Calu3 (cell line): ENCODE measurements at regions of chr6 and their contacts with region 1.

Region 1: DNA sequence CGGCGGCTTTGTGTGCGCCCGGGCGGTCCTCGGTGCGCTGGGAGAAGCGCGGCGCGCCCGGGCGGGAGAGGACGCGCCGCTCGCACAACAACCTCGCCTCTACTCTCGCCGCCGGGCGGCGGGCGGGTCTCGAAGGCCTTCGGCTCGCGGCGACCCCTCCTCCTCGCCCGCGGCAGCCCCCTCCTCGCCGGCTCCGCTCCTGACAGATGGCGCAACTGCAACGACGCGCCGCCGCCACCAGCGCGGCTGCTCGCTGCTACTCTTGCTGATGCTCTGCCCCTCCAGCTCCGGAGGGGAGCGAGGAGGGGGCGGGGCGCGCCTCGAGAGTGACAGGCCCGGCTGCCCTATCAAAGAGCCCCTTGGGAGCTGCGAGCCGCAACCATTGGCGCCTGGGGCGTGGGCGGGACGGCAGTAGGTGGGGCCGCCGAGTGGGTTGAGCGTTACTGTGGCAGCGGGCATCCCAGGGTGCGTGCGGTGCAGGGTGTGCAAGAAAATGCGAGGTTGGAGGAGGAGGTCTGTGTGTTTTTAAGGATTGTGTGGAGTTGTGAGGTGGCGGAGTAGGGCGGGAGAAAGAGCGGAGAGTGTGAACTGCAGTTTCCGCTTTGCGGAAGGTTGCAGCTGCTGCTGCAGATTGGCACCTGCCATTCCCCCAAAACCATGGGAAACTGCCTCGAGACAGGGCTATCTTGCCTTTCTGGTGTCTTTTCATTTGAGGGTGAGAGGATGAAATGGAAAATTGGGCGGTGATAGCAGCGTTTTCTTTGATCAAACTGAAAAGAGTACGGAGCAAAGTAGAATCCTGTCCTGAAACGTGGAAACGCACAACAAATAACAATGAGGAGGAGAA is at the start of gene FYN:
- DNase-seq: peak; percentile 99
- H3K4me3 Mint-ChIP-seq: peak within 1 kb of the TSS; percentile 84
- H3K27ac Mint-ChIP-seq: peak within 1 kb of the TSS; percentile 72
- H3K4me1 Mint-ChIP-seq: peaks cover 10% of the 10 kb centered on the region
- H3K27me3 Mint-ChIP-seq: no peaks in the 10 kb centered on the region
- CTCF ChIP-seq: no peak
- total RNA-seq, gene FYN: 61.0 and 64.6 TPM in 2 replicates

Region 2: DNA sequence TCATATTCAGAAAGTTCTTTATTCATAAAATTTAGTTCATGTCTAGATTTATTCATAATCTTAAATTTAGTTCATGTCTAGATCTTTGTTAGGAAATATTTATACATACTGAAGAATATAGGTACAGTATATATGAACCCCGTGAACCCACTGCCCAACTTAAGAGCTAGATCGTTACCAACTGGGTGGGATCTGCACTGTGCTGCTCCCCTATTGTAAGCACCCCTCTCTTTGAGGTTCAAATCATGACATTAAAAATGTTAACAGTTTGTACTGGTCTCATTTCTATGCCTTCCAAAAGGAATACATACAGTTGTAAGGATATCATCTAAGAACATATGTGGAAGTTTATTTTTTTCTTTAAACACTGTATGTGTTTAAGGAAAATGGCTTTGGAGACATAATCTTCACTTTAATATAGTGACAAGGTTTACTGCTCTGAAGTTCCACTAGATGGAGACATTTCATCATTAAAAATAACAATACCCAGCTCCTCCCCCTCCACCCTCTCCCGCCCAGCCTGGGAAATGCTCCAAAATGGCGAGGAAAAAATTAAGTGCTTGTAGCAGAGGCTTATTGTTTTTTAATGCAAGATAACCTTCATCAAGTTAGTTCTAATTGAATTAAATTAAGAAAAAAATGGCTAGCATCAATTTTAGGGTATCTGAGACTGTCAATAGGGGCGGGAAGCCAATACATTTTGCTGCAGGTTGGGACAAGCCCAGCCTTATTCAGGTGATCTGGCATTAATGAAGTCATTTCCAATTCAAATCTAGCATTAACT is 163.6 kb before region 1 on chr6:
- CTCF ChIA-PET with region 1: no interaction called
- intact Hi-C with region 1: loop called (anchors 2 kb)
- DNase-seq: peak; percentile 59
- H3K4me3 Mint-ChIP-seq: no peak overlapping the region
- H3K27ac Mint-ChIP-seq: no peak overlapping the region
- H3K4me1 Mint-ChIP-seq: peaks cover 15% of the 10 kb centered on the region
- H3K27me3 Mint-ChIP-seq: no peaks in the 10 kb centered on the region
- CTCF ChIP-seq: peak; percentile 75

Region 3: DNA sequence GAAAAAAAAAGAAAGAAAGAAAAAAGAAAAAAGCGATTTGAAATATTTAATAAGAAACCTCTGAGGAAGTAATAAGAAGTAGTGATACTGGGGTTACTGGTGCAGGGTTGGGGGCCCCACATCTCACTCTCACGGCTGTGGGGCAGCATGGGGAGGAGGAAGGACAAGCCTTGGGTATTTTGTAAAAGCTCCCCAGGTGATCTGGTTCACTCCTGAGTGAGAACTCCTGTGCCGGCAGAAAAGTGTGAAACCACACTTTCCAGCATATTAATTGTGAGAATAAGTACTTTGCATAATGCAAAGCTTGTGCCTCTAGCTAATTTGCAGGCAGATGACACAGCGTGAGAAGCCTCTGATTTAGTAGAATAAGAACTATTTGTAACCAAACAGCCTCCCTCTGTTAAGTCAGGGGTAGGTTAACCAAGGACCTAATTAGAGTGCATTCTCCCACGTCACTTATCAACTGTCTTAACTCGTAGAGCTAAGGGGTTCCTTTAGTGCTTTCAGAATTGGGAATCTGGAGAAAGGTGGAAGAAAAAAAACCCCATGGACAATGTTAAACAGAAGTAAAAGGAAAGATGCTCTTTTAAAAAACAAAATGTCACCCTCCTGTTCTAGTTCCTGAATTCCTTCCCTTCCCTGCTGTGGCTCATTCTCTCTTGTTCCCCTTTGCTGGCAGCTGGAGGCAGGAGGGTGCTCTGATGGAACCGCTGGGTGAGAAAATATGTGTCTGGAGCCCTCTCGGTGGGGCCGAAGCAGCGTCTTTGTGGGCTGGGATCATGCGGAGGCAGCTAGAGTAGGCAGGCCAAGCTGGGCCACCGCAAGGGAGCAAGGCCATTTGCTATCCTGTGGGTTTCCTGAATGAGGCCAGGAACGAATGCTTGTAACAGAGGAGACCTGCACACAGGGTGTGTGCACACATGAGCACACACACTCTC is 108.9 kb before region 1 on chr6:
- CTCF ChIA-PET with region 1: no interaction called
- intact Hi-C with region 1: loop called (anchors 5 kb)
- DNase-seq: no peak
- H3K4me3 Mint-ChIP-seq: no peak overlapping the region
- H3K27ac Mint-ChIP-seq: no peak overlapping the region
- H3K4me1 Mint-ChIP-seq: peaks cover 48% of the 10 kb centered on the region
- H3K27me3 Mint-ChIP-seq: no peaks in the 10 kb centered on the region
- CTCF ChIP-seq: no peak

Region 4: GRCh38 chr6:111793711-111794111 is 79.7 kb before region 1 on chr6:
- CTCF ChIA-PET with region 1: no interaction called
- intact Hi-C with region 1: no loop called
- DNase-seq: no peak
- H3K4me3 Mint-ChIP-seq: no peak overlapping the region
- H3K27ac Mint-ChIP-seq: no peak overlapping the region
- H3K4me1 Mint-ChIP-seq: no peaks in the 10 kb centered on the region
- H3K27me3 Mint-ChIP-seq: no peaks in the 10 kb centered on the region
- CTCF ChIP-seq: no peak

Region 5: DNA sequence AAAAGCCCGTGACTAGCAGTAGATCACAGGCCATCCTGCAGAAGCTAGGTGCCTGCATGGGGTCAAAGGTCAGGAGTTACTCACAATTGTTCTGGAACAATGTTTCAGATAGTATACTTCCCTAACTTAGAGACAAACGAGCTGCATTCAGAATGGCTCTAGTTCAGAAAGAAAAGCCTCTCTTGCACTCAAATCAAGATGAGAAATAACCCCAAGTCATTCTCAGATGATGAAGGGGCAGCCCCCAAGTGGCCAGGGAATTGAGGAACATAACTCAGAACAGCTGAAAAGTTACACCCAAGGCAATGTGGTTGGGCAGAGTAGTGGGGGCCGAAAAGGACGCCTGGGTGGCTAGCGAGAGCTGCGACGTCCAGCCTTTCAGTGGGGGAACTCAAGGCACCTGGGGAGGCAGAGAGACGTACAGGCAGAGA is 27.9 kb before region 1 on chr6:
- CTCF ChIA-PET with region 1: no interaction called
- intact Hi-C with region 1: loop called (anchors 2 kb)
- DNase-seq: no peak
- H3K4me3 Mint-ChIP-seq: no peak overlapping the region
- H3K27ac Mint-ChIP-seq: no peak overlapping the region
- H3K4me1 Mint-ChIP-seq: peaks cover 32% of the 10 kb centered on the region
- H3K27me3 Mint-ChIP-seq: no peaks in the 10 kb centered on the region
- CTCF ChIP-seq: no peak

Region 6: GRCh38 chr6:111997078-111997852 is 123.9 kb after region 1 on chr6:
- CTCF ChIA-PET with region 1: no interaction called
- intact Hi-C with region 1: loop called (anchors 2 kb)
- DNase-seq: peak; percentile 82
- H3K4me3 Mint-ChIP-seq: no peak overlapping the region
- H3K27ac Mint-ChIP-seq: no peak overlapping the region
- H3K4me1 Mint-ChIP-seq: peaks cover 13% of the 10 kb centered on the region
- H3K27me3 Mint-ChIP-seq: no peaks in the 10 kb centered on the region
- CTCF ChIP-seq: peak; percentile 67

Region 7: DNA sequence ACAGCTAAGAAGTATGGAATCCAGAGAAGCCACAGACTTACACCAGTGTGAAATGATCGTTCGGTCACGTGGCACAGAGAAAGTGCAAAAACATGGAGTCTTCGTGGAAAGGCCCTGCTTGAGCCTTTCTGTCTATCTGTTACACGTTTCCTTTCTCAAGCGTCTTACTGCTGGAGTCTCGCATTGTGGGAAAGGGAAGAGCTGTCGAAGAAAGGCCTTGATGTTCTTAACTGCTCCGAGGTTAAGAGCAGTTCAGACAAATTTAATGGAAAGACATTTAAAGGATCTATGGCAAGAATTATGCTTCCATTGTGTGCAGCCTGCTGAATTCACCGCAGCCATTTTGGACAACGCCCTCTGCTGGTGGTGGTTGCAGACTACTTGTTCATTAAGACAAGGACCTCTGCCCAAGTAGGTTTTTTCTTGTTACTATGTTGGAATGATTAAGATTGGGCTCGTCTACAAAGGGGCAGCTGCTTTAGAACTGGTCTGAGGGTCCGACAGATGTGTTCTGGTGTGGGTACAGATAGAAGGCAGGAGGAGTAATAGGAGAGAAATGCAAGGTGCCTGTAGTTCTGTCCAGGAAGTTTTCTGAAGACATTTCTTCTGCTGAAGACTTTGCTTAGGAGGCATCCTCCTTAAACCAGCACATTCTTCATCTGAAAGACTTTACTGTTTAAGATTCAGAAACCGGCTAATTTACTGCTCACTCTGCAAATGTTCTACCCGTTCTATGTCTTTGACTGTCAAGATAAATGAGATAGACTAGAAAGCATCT is 155.8 kb after region 1 on chr6:
- CTCF ChIA-PET with region 1: no interaction called
- intact Hi-C with region 1: loop called (anchors 1 kb)
- DNase-seq: peak; percentile 78
- H3K4me3 Mint-ChIP-seq: no peak overlapping the region
- H3K27ac Mint-ChIP-seq: no peak overlapping the region
- H3K4me1 Mint-ChIP-seq: peaks cover 15% of the 10 kb centered on the region
- H3K27me3 Mint-ChIP-seq: peaks cover 31% of the 10 kb centered on the region
- CTCF ChIP-seq: peak; percentile 41